ENCODE measurements at regions of chr3 and their contacts with region 1.

Region 1: GRCh38 chr3:70729845-70730244 is 417.4 kb upstream of the MDFIC2 start:
- DNase-seq: no peak
- H3K4me3 Mint-ChIP-seq: no peak overlapping the region
- H3K27ac Mint-ChIP-seq: no peak overlapping the region
- H3K4me1 Mint-ChIP-seq: no peaks in the 10 kb centered on the region
- H3K27me3 Mint-ChIP-seq: peaks cover 6% of the 10 kb centered on the region

Region 2: DNA sequence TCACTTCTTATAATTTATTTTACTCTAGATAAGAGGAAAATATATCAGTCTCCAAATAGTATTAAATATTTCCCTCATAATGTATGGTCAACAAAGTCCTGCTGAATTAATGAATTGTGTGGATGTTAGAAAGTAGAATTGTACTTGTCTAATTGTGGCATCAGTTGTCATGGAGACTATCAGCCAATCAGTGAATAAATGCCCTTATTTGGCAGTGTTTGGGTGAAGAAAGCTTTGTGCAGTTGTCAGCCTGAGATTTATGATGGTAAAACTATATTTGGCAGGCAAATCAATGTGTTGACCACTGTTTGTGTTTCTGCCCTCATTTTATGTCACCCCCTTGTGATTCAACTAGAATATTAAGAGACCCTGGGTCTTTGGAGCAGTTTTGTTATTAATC is 123.8 kb before region 1 on chr3:
- CTCF ChIA-PET with region 1: no interaction called
- POLR2A ChIA-PET with region 1: no interaction called
- DNase-seq: no peak
- H3K4me3 Mint-ChIP-seq: no peak overlapping the region
- H3K27ac Mint-ChIP-seq: no peak overlapping the region
- H3K4me1 Mint-ChIP-seq: no peaks in the 10 kb centered on the region
- H3K27me3 Mint-ChIP-seq: peaks cover 4% of the 10 kb centered on the region

Region 3: DNA sequence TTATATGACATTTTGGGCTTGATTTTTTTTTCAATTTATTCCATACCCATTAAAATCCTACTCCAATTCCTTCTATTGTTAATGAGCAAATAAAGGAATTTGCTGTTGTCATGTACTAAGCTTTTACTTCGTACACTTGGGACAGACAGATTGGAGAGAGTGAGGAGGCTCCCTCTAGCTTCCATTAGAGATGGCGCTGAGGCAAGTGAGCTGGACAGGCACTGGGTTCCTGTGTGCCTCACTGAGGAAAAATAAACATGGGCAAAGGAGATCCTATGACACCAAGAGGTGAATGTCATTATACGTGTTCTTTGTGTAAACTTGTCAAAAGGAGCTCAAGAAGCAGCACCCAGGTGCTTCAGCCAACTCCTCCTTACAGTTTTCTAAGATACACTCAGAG is 23.8 kb after region 1 on chr3:
- CTCF ChIA-PET with region 1: no interaction called
- POLR2A ChIA-PET with region 1: no interaction called
- DNase-seq: no peak
- H3K4me3 Mint-ChIP-seq: no peak overlapping the region
- H3K27ac Mint-ChIP-seq: no peak overlapping the region
- H3K4me1 Mint-ChIP-seq: no peaks in the 10 kb centered on the region
- H3K27me3 Mint-ChIP-seq: peaks cover 4% of the 10 kb centered on the region

Region 4: DNA sequence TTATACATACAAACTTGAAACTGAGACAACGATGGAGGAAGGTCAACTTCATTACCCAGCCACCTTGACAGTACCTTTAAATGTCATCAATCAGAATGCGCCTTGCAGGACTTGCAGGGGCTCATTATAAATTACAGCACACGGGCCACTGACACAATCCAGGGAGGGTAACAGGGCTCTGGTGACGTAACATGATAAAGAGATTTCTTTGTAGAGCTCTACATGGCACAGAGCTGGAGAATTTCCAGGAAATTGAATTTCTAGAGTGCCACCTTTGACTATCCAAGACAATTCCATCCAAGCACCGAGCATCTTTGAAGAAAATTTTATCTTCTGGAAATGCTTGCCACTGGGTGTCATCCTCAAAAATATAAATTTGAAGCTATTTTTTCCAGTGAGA is 367.7 kb after region 1 on chr3:
- CTCF ChIA-PET with region 1: interaction called, 10 read pairs
- POLR2A ChIA-PET with region 1: no interaction called
- DNase-seq: no peak
- H3K4me3 Mint-ChIP-seq: no peak overlapping the region
- H3K27ac Mint-ChIP-seq: no peak overlapping the region
- H3K4me1 Mint-ChIP-seq: peaks cover 63% of the 10 kb centered on the region
- H3K27me3 Mint-ChIP-seq: no peaks in the 10 kb centered on the region

Measured in activated CD4-positive, alpha-beta T cell treated with anti-CD3 and anti-CD28 coated beads, Interleukin-2, amount 10 ng/mL, durations not matched to agents 7 days and 5 days (primary cell).